ENCODE measurements at regions of chr2 and their contacts with region 1.

Region 1: DNA sequence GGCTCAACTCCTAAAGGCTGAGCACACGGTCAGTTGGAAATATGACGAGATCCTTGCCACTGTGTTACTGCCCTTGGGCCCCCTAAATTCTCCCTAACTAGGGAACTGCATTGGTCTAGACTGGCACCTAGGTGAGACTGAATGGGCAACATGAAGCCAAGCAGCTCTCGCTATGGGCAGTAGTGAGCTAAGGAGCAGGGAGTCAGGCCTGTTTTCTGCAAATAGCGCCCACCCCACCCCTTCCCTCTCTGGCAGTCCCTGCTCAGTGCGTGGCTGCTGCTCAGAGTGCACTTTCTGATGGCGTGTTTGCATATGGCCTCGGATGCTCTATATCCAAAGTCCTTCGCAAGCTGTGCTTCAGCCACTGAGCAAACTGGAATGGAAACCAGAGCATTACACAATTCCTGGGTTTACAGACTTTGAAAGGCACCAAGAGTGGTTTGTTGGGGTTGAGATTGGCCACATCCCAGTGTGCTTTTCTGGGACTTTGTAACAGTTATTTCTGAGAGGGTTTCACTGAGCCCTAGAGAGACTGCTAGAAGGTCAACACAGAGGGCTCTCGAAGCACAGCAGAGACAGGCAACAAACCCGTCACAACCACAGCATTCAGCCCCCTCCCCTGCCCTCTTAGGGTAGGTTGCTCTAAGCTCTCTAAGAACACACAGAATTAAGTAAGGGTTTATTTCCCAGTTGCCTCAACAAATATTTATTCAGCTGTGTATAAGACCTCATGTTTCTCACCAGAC is 419.9 kb downstream of the STK39 start:
- DNase-seq: no peak
- H3K4me3 ChIP-seq: no peak overlapping the region
- H3K27ac ChIP-seq: no peak overlapping the region
- H3K4me1 ChIP-seq: no peaks in the 10 kb centered on the region
- H3K27me3 ChIP-seq: no peaks in the 10 kb centered on the region
- CTCF ChIP-seq: no peak
- EP300 ChIP-seq: no peak
- POLR2A ChIP-seq: no peak

Region 2: DNA sequence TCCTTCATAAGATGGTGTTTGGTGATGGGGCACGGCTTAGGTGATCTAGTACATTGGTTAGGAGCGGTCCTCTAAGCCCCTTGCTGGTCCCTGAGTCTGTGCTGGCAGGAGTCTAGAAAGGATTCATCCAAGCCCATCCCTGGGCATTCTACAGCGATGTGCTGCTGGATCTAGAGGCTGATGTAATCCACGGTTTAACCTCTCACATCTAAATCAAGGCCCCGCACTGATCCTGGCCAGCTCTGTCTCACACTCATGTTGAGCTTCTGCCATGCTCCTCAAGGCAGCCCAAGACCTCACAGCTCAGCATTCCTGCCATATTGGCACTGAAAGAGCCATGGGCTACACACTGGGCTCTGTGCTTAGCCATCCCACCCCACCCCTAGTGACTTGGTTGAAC is 244.9 kb before region 1 on chr2:
- in situ Hi-C with region 1: no loop called
- intact Hi-C with region 1: no loop called
- DNase-seq: no peak
- H3K4me3 ChIP-seq: no peak overlapping the region
- H3K27ac ChIP-seq: no peak overlapping the region
- H3K4me1 ChIP-seq: peaks cover 0 to 7% (median 3%) of the 10 kb centered on the region in 4 donors
- H3K27me3 ChIP-seq: no peaks in the 10 kb centered on the region
- CTCF ChIP-seq: no peak
- EP300 ChIP-seq: no peak
- POLR2A ChIP-seq: no peak

Region 3: GRCh38 chr2:167851323-167851860 is 23.9 kb after region 1 on chr2:
- in situ Hi-C with region 1: no loop called
- intact Hi-C with region 1: loop called (anchors 2 kb)
- DNase-seq: no peak
- H3K4me3 ChIP-seq: no peak overlapping the region
- H3K27ac ChIP-seq: no peak overlapping the region
- H3K4me1 ChIP-seq: no peaks in the 10 kb centered on the region
- H3K27me3 ChIP-seq: no peaks in the 10 kb centered on the region
- CTCF ChIP-seq: no peak
- EP300 ChIP-seq: no peak
- POLR2A ChIP-seq: no peak